CD8-positive, alpha-beta T cell (primary cell): ENCODE measurements at regions of chr12 and their contacts with region 1.

Region 1: DNA sequence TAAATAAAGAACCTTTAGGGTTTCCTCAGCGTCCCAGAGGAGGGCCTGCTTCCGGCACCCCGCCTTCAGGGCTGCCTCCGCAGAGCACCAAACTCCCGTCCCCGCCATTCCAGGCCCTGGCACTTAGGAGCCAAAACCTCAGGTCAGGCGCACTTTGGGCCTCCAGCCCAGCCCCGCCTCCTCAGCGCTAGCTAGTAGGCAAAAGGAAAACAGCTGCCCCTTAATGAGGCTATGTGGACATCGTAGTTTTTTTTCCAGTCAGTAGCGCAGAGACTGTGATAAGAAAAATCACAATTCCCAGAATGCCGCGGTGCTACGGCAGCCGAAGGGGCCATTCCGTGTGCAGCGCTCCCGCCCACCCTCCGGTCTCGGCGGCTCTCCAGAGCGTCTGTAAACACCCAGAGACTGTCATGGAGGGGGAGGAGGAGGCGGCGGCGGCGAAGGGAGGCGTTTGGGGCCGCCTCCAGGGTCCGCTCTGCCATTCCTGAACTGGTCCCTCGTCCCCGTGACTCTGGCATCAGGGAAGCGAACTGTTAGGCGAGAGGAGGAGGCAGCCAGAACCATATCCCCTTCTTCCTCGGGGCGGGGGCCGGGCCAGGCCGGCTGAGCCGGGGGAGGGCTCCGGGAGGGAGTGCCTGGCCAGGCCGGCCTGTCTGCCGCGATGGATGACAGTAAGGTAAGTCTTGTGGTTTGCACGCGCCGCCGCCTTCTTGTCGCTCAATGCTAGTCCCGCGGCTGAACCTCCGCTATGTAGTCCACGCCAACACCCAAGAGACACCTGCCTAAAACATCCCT is at the start of gene CREBL2:
- DNase-seq: peak; percentile 72 to 95 (median 85)
- ATAC-seq: peak; percentile 90
- H3K4me3 ChIP-seq: peak within 1 kb of the TSS; percentile 72 to 90
- H3K4me3 Mint-ChIP-seq: peak within 1 kb of the TSS; percentile 88
- H3K27ac ChIP-seq: peak within 1 kb of the TSS; percentile 82 to 89
- H3K27ac Mint-ChIP-seq: peak within 1 kb of the TSS; percentile 95
- H3K4me1 ChIP-seq: peaks cover 52% of the 10 kb centered on the region
- H3K4me1 Mint-ChIP-seq: peaks cover 53% of the 10 kb centered on the region
- H3K27me3 ChIP-seq: no peaks in the 10 kb centered on the region
- H3K27me3 Mint-ChIP-seq: no peaks in the 10 kb centered on the region
- CTCF ChIP-seq: no peak
- total RNA-seq, gene CREBL2: 10.2 to 11.8 TPM

Region 2: DNA sequence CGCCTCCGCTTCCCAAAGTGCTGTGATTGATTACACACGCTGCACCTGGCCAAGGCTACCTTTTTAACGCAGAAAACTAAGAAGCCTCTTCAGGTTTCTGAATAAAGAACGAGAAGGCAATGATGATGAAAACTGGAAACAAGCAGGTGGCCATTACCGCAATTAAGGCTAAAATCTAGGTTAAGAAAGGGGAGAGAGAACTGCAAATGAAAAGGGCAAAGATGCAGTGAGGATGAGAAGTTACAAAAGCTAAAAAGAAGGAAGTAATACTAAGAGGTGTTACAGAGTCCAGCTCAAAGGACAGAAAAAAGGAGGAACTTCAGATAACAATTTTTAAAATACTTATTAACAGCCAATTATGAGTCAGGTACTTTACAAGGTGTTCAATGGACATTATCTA is 128.8 kb before region 1 on chr12:
- CTCF ChIA-PET with region 1: no interaction called
- POLR2A ChIA-PET with region 1: no interaction called
- intact Hi-C with region 1: loop called (anchors 2 kb)
- DNase-seq: no peak
- ATAC-seq: no peak
- H3K4me3 ChIP-seq: peak overlapping the region in 1 of 2 experiments; percentile 11
- H3K4me3 Mint-ChIP-seq: peak overlapping the region; percentile 47
- H3K27ac ChIP-seq: peak overlapping the region; percentile 73 to 83
- H3K27ac Mint-ChIP-seq: peak overlapping the region; percentile 99
- H3K4me1 ChIP-seq: peaks cover 28% of the 10 kb centered on the region
- H3K4me1 Mint-ChIP-seq: peaks cover 52% of the 10 kb centered on the region
- H3K27me3 ChIP-seq: no peaks in the 10 kb centered on the region
- H3K27me3 Mint-ChIP-seq: no peaks in the 10 kb centered on the region
- CTCF ChIP-seq: no peak

Region 3: DNA sequence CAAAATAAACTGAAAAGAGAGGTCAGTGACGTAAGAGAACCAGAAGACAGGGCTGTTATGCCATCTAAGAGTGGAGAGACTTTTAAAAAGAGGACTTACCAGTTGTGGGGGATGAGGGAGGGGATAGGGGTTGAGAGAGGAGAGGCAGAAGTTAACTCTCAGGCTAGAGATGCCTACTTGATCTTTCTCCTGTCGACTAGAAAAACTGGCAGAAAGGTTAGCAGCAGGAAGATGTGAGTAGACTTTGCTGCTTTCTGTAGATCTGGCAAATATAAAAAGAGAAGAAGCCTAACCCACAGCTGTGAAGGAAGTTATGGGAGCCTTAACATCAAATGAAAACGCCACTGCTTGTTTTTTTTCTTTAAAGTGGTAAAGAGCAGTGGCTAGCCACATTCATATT is 10.7 kb after region 1 on chr12:
- CTCF ChIA-PET with region 1: interaction called, 11 read pairs
- POLR2A ChIA-PET with region 1: no interaction called
- intact Hi-C with region 1: loop called in 1 of 2 experiments (anchors 1 kb)
- DNase-seq: peak in 4 of 9 experiments; percentile 19 to 74 (median 36)
- ATAC-seq: peak; percentile 91
- H3K4me3 ChIP-seq: peak overlapping the region in 1 of 2 experiments; percentile 15
- H3K4me3 Mint-ChIP-seq: peak overlapping the region; percentile 67
- H3K27ac ChIP-seq: peak overlapping the region; percentile 50 to 66
- H3K27ac Mint-ChIP-seq: peak overlapping the region; percentile 87
- H3K4me1 ChIP-seq: peaks cover 48% of the 10 kb centered on the region
- H3K4me1 Mint-ChIP-seq: peaks cover 73% of the 10 kb centered on the region
- H3K27me3 ChIP-seq: no peaks in the 10 kb centered on the region
- H3K27me3 Mint-ChIP-seq: no peaks in the 10 kb centered on the region
- CTCF ChIP-seq: no peak

Region 4: DNA sequence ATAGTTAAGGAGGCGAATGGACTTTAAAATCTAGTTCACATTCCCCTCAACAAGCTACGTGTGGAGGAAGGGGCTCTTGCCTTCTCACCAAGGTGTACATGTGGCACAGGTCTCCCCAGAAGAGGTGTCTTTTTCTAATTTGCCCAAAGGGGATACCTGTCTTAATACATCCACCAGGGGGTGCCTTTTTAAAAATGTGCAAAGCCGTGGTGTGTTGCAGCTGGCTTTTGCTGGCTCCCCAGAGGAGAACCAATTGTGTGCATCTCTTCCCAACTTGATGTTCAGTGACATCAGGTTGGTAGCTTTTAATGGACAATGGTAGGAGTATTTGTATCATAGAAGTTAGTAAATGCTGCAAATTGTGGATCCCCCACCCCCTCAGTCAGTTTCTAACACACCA is 33.8 kb after region 1 on chr12:
- CTCF ChIA-PET with region 1: interaction called, 3 read pairs
- POLR2A ChIA-PET with region 1: no interaction called
- intact Hi-C with region 1: loop called in 1 of 2 experiments (anchors 5 kb)
- DNase-seq: peak in 8 of 9 experiments; percentile 9 to 79 (median 48)
- ATAC-seq: peak; percentile 97
- H3K4me3 ChIP-seq: no peak overlapping the region
- H3K4me3 Mint-ChIP-seq: no peak overlapping the region
- H3K27ac ChIP-seq: no peak overlapping the region
- H3K27ac Mint-ChIP-seq: peak overlapping the region; percentile 50
- H3K4me1 ChIP-seq: no peaks in the 10 kb centered on the region
- H3K4me1 Mint-ChIP-seq: peaks cover 5% of the 10 kb centered on the region
- H3K27me3 ChIP-seq: no peaks in the 10 kb centered on the region
- H3K27me3 Mint-ChIP-seq: no peaks in the 10 kb centered on the region
- CTCF ChIP-seq: peak; percentile 64

Region 5: DNA sequence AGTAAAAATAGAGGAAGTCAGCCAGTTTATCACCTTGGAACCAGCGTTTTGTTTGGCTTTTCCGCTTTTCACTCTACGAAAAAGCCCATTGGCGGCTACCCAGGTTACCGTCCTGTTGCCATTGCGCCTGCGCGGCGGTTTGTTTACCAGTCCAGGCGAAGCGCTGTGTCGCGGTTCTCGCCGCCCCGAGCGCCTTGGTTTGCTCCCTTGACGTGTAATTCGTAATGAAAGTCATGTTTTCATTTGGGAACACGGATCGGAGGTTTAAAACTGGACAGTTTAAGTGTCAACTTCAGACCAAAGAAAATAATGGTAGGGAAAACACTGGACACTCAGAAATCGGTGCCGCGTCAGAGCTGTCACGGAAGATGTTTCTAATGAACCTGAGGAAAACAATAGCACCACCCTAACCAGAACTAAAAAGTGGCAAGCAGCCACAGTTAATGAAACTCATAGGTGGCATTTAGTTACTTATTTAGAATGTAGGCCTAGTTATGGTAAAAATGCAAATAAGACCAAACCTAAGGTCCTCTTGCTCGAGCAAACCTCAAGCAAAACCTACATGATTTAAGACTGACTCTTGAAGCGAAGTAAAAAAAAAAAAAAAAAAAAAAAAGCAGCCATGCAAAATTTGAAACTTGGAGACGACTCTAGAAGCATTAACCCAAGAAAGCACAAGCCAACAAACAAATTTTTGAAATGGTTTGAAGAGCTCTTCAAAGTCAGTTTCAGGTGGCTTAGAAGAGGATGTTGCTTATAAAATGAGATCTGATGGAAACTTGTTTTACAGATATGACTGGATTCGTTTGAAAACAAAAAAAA is 85.1 kb after region 1 on chr12:
- CTCF ChIA-PET with region 1: interaction called, 3 read pairs
- POLR2A ChIA-PET with region 1: no interaction called
- intact Hi-C with region 1: loop called (anchors 1 to 5 kb)
- DNase-seq: peak; percentile 87 to 96 (median 94)
- ATAC-seq: peak; percentile 84
- H3K4me3 ChIP-seq: peak overlapping the region; percentile 42 to 88
- H3K4me3 Mint-ChIP-seq: peak overlapping the region; percentile 93
- H3K27ac ChIP-seq: peak overlapping the region; percentile 96 to 100
- H3K27ac Mint-ChIP-seq: peak overlapping the region; percentile 100
- H3K4me1 ChIP-seq: peaks cover 20% of the 10 kb centered on the region
- H3K4me1 Mint-ChIP-seq: peaks cover 29% of the 10 kb centered on the region
- H3K27me3 ChIP-seq: no peaks in the 10 kb centered on the region
- H3K27me3 Mint-ChIP-seq: no peaks in the 10 kb centered on the region
- CTCF ChIP-seq: no peak

Region 6: DNA sequence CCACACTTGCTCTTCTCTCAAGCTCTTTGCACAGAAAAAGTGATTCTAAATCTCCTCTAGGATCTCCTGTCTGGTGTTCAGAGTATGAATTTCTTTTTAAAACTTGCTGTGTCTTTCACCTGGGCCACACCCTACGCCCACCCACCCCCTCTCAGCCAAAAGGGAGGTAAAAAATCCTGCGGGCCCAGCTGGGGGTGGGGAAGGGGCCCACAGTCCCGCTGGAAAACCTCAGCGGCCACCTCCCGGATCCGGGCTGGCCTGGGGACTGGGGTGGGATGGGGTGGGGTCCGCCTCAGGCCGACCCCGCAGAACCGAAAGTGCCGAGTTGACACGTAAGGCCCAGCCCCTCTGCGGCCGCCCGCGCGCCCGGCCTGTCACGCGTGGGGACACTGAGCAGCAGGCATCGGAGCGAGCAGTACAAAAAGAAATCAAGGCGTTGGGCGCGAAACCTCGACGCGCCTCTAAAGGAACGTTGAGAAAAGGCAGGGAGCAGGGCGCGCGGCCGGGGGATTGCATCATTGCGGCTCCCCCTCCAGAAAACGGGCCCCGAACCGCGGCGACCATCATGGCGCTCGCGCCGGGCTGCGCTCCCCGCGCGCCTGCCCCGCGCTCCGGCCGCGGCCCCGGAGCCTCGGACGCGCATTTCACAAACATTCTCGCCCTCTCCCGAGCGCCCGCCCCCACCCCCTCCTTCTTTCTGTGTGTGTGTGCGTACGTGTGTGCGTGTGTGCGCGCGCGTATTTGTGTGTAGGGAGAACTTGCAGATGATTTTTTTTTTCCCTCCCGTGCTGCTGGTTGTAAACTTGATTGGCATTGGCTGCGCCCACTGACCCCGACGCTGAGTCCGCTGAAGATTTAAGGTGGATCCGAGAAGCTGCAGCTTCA is 113.2 kb after region 1 on chr12:
- CTCF ChIA-PET with region 1: no interaction called
- POLR2A ChIA-PET with region 1: interaction called, 8 read pairs
- intact Hi-C with region 1: loop called in 1 of 2 experiments (anchors 1 kb)
- DNase-seq: peak in 8 of 9 experiments; percentile 82 to 98 (median 86)
- ATAC-seq: peak; percentile 57
- H3K4me3 ChIP-seq: peak overlapping the region; percentile 90 to 92
- H3K4me3 Mint-ChIP-seq: peak overlapping the region; percentile 82
- H3K27ac ChIP-seq: peak overlapping the region; percentile 93 to 97
- H3K27ac Mint-ChIP-seq: peak overlapping the region; percentile 99
- H3K4me1 ChIP-seq: peaks cover 51% of the 10 kb centered on the region
- H3K4me1 Mint-ChIP-seq: peaks cover 52% of the 10 kb centered on the region
- H3K27me3 ChIP-seq: no peaks in the 10 kb centered on the region
- H3K27me3 Mint-ChIP-seq: no peaks in the 10 kb centered on the region
- CTCF ChIP-seq: no peak

Region 7: DNA sequence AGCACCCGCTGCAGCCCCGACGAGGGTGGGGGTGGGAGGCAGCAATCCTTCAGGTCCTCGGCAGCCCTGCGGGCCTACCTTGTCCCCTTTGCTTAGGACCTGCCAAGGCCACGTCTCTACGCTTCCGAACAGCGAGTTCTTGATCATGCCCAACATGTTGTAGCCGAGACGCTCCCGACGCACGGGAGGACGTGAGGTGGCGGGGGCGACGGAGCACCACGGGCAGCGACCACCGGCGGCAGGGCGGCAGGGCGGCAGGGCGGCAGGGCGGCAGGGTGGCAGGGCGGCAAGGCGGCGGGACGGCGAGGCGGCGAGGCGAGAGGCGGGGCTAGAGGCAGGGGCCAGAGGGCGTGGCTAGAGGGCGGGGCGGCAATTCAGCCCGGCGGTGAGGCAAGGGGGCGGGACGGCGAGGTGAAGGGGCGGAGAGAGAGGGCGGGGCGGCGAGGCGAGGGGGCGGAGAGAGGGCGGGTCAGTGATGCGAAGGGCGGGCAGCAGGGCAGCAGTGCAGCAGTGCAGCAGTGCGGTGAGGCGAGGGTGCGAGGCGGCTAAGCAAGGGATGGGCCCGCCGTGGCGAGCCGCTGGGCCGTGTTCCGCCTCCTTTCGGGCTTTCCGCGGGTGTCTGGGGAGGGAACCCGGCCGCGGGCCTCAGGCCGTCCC is 388.4 kb after region 1 on chr12 and contains the start of gene HEBP1:
- CTCF ChIA-PET with region 1: no interaction called
- POLR2A ChIA-PET with region 1: no interaction called
- intact Hi-C with region 1: loop called in 1 of 2 experiments (anchors 5 kb)
- DNase-seq: peak; percentile 90 to 98 (median 96)
- ATAC-seq: peak; percentile 95
- H3K4me3 ChIP-seq: peak within 1 kb of the TSS; percentile 84 to 85
- H3K4me3 Mint-ChIP-seq: peak within 1 kb of the TSS; percentile 96
- H3K27ac ChIP-seq: peak within 1 kb of the TSS; percentile 41 to 55
- H3K27ac Mint-ChIP-seq: peak within 1 kb of the TSS; percentile 82
- H3K4me1 ChIP-seq: peaks cover 20% of the 10 kb centered on the region
- H3K4me1 Mint-ChIP-seq: peaks cover 29% of the 10 kb centered on the region
- H3K27me3 ChIP-seq: peaks cover 0 to 4% of the 10 kb centered on the region in 2 experiments
- H3K27me3 Mint-ChIP-seq: peaks cover 6% of the 10 kb centered on the region
- CTCF ChIP-seq: no peak
- total RNA-seq, gene HEBP1: 4.6 to 5.6 TPM